ENCODE measurements at regions of chr1 and their contacts with region 1.

Region 1: DNA sequence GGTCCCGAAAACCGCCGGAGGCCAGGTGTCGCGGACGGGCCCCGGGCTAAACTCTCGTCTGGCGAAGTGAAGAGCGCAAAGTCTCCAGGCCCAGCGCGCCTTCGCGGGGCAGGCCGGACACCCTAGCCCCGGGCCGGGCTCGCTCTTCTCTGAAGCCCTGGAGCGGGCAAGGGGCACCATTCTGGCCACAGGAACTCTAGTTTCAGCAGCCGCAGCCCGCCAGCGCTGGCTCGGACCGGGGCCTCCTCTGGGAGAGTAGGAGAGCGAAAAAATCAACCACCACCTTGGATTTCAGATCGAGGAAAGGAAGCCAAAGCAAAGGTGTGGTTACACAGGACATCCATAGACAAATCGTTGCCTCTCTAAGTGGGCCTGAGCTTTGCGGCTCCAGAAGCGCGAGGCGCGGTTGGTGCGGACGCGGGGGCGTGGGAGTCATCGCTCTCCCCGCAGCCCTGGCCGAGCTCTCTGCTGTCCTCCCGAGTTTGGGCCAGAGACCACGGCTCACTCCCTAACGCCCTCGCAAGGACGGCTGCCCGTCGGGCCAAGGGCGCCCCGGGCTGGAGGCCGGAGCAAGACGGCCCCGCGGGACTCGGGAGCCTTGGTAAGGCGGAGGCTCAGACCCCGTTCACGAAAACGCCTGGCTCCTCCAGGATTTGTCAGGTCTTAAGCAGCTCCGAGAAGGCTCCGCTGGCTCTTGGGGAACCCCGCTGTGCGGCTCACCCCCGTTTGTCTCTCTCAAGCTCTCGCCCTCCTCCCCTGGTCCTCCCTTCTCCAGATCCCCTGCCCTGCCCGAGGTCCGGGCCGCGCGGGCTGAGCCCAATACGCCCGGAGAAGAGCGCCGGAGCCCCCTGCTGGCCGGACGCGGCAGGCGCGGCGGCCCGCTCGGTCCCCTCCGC is 132.9 kb upstream of the DPYD start:
- DNase-seq: no peak
- ATAC-seq: peak; percentile 100
- H3K4me3 ChIP-seq: no peak overlapping the region
- H3K27ac ChIP-seq: no peak overlapping the region
- H3K4me1 ChIP-seq: no peaks in the 10 kb centered on the region
- H3K27me3 ChIP-seq: no peaks in the 10 kb centered on the region
- CTCF ChIP-seq: peak in 2 of 3 experiments; percentile 65 to 74; a peak in 4 of 6 replicates
- POLR2A ChIP-seq: no peak
- RAD21 ChIP-seq: peak; percentile 38

Region 2: GRCh38 chr1:96966536-96967138 is 1087.1 kb before region 1 on chr1:
- CTCF ChIA-PET with region 1: no interaction called
- POLR2A ChIA-PET with region 1: no interaction called
- RAD21 ChIA-PET with region 1: no interaction called
- intact Hi-C with region 1: loop called (anchors 2 kb)
- DNase-seq: peak; percentile 59
- ATAC-seq: peak; percentile 94
- H3K4me3 ChIP-seq: no peak overlapping the region
- H3K27ac ChIP-seq: no peak overlapping the region
- H3K4me1 ChIP-seq: no peaks in the 10 kb centered on the region
- H3K27me3 ChIP-seq: no peaks in the 10 kb centered on the region
- CTCF ChIP-seq: peak; percentile 40 to 90 (median 72); a peak in 5 of 6 replicates
- POLR2A ChIP-seq: no peak
- RAD21 ChIP-seq: peak; percentile 73

Region 3: DNA sequence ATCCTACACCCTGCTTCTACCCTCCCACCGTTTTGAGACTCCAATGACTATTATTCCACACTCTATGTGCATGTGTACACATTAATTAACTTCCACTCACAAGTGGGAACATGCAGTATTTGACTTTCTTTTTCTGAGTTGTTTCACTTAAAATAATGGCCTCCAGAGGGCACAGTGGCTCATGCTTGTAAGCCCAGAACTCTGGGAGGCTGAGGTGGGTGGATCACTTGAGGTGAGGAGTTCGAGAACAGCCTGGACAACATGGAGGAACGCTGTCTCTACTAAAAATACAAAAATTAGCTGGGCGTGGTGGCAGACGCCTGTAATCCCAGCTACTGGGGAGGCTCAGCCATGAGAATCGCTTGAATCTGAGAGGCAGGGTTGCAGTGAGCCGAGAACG is 867.3 kb before region 1 on chr1:
- CTCF ChIA-PET with region 1: no interaction called
- POLR2A ChIA-PET with region 1: no interaction called
- RAD21 ChIA-PET with region 1: no interaction called
- intact Hi-C with region 1: loop called (anchors 2 kb)
- DNase-seq: peak; percentile 29
- ATAC-seq: peak; percentile 69
- H3K4me3 ChIP-seq: no peak overlapping the region
- H3K27ac ChIP-seq: no peak overlapping the region
- H3K4me1 ChIP-seq: peaks cover 0 to 5% of the 10 kb centered on the region in 2 experiments; a peak in 1 of 4 replicates
- H3K27me3 ChIP-seq: no peaks in the 10 kb centered on the region
- CTCF ChIP-seq: peak; percentile 33 to 50 (median 39); a peak in 5 of 6 replicates
- POLR2A ChIP-seq: no peak
- RAD21 ChIP-seq: peak; percentile 65

Region 4: DNA sequence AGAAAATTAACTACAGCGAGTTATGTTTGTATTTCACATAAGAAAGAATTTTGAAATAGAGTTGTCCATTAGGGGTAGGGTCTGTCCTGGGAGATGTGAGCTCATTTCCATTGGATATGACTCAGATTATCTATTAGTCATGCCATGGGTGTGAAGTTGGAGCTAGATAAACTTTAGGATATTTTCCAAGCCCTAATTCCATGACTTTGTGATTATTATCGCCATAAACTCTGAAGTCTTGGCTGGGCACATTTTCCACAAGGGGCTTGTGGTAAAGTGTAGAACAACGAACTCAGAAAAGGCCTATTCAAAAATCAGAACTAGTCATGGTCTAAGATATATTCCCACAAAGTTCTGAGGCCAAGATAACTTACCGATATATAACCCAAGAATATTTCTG is 529.5 kb before region 1 on chr1:
- CTCF ChIA-PET with region 1: no interaction called
- POLR2A ChIA-PET with region 1: no interaction called
- RAD21 ChIA-PET with region 1: no interaction called
- intact Hi-C with region 1: loop called (anchors 10 kb)
- DNase-seq: no peak
- ATAC-seq: no peak
- H3K4me3 ChIP-seq: no peak overlapping the region
- H3K27ac ChIP-seq: no peak overlapping the region
- H3K4me1 ChIP-seq: no peaks in the 10 kb centered on the region
- H3K27me3 ChIP-seq: no peaks in the 10 kb centered on the region
- CTCF ChIP-seq: no peak
- POLR2A ChIP-seq: no peak
- RAD21 ChIP-seq: no peak

Region 5: DNA sequence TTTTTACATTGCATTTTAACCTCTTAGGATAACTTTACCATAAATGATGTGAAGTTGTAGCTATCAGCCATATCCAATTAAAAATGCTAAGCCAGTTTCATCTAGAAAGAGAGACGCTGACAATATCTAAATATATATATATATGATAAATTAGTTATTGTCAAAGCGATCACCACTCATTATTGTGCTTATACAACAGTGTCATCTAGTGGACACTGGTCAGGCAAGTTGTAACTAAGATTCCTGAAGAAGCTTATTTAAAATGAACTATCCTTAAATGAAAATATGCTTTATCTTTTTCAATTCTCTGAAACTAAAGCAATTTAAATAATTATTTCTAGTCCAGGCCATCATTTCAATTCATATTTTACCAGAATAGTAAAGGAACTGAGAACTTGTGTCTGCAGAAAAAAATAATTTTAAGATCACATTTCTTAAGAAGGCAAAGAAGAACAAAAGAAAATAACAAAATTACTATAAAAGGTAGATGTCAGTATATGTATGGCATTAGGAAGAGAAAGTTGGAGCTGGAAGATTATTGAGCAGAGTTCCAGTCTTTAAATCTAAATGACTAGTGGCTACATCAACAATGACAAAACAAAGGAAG is 414.5 kb after region 1 on chr1:
- CTCF ChIA-PET with region 1: interaction called, 3 read pairs
- POLR2A ChIA-PET with region 1: no interaction called
- RAD21 ChIA-PET with region 1: no interaction called
- intact Hi-C with region 1: loop called (anchors 2 kb)
- DNase-seq: peak; percentile 44
- ATAC-seq: 0 out of 2 replicates have a peak, but pooled peaks have one; percentile 53
- H3K4me3 ChIP-seq: no peak overlapping the region
- H3K27ac ChIP-seq: no peak overlapping the region
- H3K4me1 ChIP-seq: no peaks in the 10 kb centered on the region
- H3K27me3 ChIP-seq: no peaks in the 10 kb centered on the region
- CTCF ChIP-seq: peak; percentile 51 to 77 (median 64); a peak in 5 of 6 replicates
- POLR2A ChIP-seq: no peak
- RAD21 ChIP-seq: peak; percentile 82